ENCODE measurements at regions of chr20 and their contacts with region 1.

Region 1: GRCh38 chr20:50750145-50750671 is 18.8 kb downstream of the PARD6B start:
- DNase-seq: no peak
- H3K4me3 Mint-ChIP-seq: no peak overlapping the region
- H3K27ac Mint-ChIP-seq: no peak overlapping the region
- H3K4me1 Mint-ChIP-seq: peaks cover 23% of the 10 kb centered on the region
- H3K27me3 Mint-ChIP-seq: no peaks in the 10 kb centered on the region

Region 2: DNA sequence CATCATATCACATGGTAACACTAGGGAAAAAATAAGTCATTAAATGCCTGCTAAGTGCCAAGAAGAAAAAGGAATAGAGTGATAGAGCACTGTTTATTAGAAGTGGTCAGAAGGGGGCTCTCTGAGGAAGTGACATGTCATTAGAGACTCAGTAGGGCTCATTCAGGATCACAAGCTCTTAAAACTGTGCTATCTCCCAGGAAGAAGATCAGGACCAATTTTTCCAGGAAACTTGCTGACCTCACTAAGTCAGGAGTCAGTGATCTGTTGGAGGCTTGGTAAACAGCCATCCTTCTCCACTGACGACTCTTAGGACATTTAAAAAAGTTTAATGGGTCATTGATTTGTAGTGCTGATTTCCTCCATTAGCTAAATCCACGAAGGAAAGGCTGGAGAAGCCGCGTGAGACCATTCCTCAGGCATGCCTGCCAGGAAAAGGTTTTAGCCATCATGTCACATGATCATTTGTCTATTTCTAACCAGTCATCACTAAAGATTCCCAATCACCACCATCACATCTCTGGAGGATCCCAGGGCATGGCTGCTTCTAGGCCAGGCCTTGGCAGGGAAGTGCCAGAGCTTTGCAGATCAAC is 245.9 kb before region 1 on chr20:
- CTCF ChIA-PET with region 1: no interaction called
- POLR2A ChIA-PET with region 1: no interaction called
- DNase-seq: no peak
- H3K4me3 Mint-ChIP-seq: no peak overlapping the region
- H3K27ac Mint-ChIP-seq: no peak overlapping the region
- H3K4me1 Mint-ChIP-seq: peaks cover 14% of the 10 kb centered on the region
- H3K27me3 Mint-ChIP-seq: no peaks in the 10 kb centered on the region

Region 3: GRCh38 chr20:50663095-50663850 is 86.9 kb before region 1 on chr20:
- CTCF ChIA-PET with region 1: interaction called, 15 read pairs
- POLR2A ChIA-PET with region 1: no interaction called
- DNase-seq: no peak
- H3K4me3 Mint-ChIP-seq: no peak overlapping the region
- H3K27ac Mint-ChIP-seq: no peak overlapping the region
- H3K4me1 Mint-ChIP-seq: no peaks in the 10 kb centered on the region
- H3K27me3 Mint-ChIP-seq: peaks cover 9% of the 10 kb centered on the region

Region 4: DNA sequence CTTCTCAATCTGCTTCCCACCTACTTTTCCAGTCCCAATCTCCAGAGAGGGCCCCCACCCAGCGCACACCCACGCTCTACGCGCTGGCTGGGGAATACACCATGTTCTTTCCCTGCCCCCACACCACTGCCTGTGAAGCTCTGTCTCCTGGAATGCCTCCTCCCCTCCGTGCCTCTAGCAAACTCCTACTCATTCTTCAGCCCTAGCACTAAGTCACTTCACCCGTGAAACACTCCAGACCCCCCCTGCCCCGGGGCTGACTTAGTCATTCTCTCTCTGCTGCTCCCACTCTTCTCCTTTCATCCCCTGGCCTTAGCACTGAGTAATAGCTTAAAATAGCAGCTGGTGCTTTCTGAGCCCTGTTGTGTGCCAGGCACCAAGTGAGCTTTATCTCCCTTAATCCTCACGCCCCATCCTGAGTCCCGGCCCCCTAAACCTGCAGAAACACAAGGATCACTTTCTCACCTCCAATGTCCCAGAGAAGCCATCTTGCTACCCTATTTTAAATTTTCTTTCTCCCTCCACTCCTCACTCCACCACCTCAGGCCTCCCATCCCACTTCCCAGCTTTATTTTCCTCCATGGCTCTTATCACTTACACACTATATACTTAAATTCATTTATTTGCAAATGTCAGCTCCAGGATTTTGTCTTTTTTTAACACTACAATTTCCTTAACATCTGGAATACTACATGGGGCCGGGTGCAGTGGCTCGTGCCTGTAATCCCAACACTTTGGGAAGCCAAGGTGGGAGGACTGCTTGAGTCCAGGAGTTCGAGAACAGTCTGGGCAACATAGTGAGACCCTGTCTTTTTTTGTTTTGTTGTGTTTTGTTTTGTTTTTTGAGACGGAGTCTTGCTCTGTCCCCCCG is 25.1 kb before region 1 on chr20:
- CTCF ChIA-PET with region 1: interaction called, 10 read pairs
- POLR2A ChIA-PET with region 1: no interaction called
- DNase-seq: no peak
- H3K4me3 Mint-ChIP-seq: no peak overlapping the region
- H3K27ac Mint-ChIP-seq: no peak overlapping the region
- H3K4me1 Mint-ChIP-seq: peaks cover 3% of the 10 kb centered on the region
- H3K27me3 Mint-ChIP-seq: no peaks in the 10 kb centered on the region

Region 5: GRCh38 chr20:50731872-50732690 is 18.1 kb before region 1 on chr20:
- CTCF ChIA-PET with region 1: interaction called, 29 read pairs
- POLR2A ChIA-PET with region 1: interaction called, 4 read pairs
- DNase-seq: no peak
- H3K4me3 Mint-ChIP-seq: peak overlapping the region; percentile 86
- H3K27ac Mint-ChIP-seq: peak overlapping the region; percentile 73
- H3K4me1 Mint-ChIP-seq: peaks cover 35% of the 10 kb centered on the region
- H3K27me3 Mint-ChIP-seq: no peaks in the 10 kb centered on the region

Region 6: DNA sequence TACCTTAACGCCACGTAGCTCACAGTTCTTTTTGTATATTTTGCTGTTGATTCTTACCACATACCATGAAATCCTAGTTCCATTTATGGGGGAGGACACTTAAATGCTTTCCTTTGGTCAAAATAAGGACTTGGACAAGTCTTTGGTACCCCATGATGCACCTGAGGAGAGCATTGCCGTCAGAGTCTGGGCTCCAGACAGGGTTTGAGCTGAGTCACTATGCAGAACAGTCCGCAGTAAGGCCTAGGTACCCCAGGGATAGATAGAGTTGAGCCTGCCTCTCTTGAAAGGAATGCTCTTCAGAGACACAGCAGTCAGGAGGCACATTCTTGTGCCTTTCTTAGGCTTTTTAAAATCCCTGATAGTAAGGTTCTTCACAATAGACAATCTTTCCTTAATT is 12.9 kb before region 1 on chr20:
- CTCF ChIA-PET with region 1: interaction called, 29 read pairs
- POLR2A ChIA-PET with region 1: interaction called, 4 read pairs
- DNase-seq: no peak
- H3K4me3 Mint-ChIP-seq: no peak overlapping the region
- H3K27ac Mint-ChIP-seq: no peak overlapping the region
- H3K4me1 Mint-ChIP-seq: peaks cover 30% of the 10 kb centered on the region
- H3K27me3 Mint-ChIP-seq: no peaks in the 10 kb centered on the region